Endothelial cell of umbilical vein (primary cell): ENCODE measurements at regions of chr3 and their contacts with region 1.

Region 1: DNA sequence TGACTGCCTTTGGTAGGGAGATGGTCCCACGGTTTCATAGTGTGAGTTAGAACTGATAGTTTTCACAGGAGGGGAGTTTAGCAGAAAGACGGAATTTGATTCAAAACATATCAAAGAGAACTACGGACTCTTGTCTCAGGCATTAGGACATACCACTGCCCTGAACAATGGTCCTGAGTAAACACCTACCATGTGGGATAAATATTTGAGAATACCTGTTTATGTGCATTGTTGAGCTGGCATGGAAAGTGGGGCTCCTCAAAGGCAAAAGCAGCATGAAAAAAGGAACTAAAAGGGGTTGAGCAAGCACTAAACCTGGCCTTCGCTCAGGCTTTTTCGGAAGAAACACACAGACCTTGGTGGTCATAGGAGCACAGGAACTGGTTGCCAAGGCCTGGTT is 144.4 kb downstream of the ZNF621 start:
- DNase-seq: no peak
- H3K4me3 ChIP-seq: no peak overlapping the region
- H3K27ac ChIP-seq: no peak overlapping the region
- H3K4me1 ChIP-seq: no peaks in the 10 kb centered on the region
- H3K27me3 ChIP-seq: peaks cover 0 to 3% of the 10 kb centered on the region in 2 experiments
- CTCF ChIP-seq: no peak
- POLR2A ChIP-seq: no peak

Region 2: DNA sequence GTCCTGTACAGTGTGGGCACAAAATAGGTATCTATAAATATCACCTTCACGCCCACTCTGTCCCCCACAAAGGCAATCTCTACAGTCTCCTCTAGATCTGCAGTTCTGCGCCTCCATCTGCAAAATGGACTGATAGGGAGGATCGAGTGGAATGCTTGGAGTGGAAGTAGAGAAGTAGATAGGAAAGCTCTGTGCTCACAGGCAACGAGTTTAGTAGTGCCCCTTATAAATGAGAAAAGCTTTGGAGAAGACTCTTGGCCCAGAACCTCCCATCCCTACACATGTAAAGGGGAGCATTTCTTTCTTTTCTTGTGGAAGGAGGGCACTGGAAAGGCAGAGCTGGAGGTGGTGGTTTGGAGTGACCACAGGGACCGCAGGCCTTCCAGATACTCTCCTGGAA is 55.9 kb before region 1 on chr3:
- CTCF ChIA-PET with region 1: no interaction called
- POLR2A ChIA-PET with region 1: no interaction called
- dilution Hi-C with region 1: no loop called
- intact Hi-C with region 1: loop called (anchors 5 kb)
- DNase-seq: no peak
- H3K4me3 ChIP-seq: no peak overlapping the region
- H3K27ac ChIP-seq: no peak overlapping the region
- H3K4me1 ChIP-seq: no peaks in the 10 kb centered on the region
- H3K27me3 ChIP-seq: peaks cover 7 to 14% of the 10 kb centered on the region in 2 experiments
- CTCF ChIP-seq: no peak
- POLR2A ChIP-seq: no peak

Region 3: DNA sequence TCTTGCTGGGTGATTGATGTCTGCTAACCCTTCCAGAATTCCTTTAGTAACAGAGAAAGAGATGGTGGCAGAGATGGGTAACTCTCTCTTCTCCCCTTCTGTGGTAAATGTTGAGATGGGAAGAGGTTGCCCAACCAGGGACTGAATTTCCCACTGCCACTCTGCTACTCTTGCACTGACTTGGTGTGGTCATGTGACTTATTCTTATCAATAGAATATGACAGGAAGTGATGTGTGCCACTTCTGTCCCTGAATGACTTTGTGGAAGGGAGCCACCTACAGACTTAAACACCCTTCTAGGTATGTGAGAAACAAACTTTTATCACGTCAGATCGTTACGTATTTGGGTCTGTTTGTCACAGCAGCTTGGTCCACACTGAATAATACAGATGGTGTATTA is 11.6 kb before region 1 on chr3:
- CTCF ChIA-PET with region 1: no interaction called
- POLR2A ChIA-PET with region 1: no interaction called
- dilution Hi-C with region 1: no loop called
- intact Hi-C with region 1: no loop called
- DNase-seq: no peak
- H3K4me3 ChIP-seq: no peak overlapping the region
- H3K27ac ChIP-seq: no peak overlapping the region
- H3K4me1 ChIP-seq: no peaks in the 10 kb centered on the region
- H3K27me3 ChIP-seq: no peaks in the 10 kb centered on the region
- CTCF ChIP-seq: no peak
- POLR2A ChIP-seq: no peak